ENCODE measurements at regions of chr4 and their contacts with region 1.

Region 1: GRCh38 chr4:1192091-1192492 is 19.7 kb upstream of the SPON2 start:
- DNase-seq: peak; percentile 94
- H3K4me3 Mint-ChIP-seq: no peak overlapping the region
- H3K27ac Mint-ChIP-seq: peak overlapping the region; percentile 51
- H3K4me1 Mint-ChIP-seq: peaks cover 18% of the 10 kb centered on the region
- H3K27me3 Mint-ChIP-seq: peaks cover 6% of the 10 kb centered on the region
- CTCF ChIP-seq: no peak

Region 2: DNA sequence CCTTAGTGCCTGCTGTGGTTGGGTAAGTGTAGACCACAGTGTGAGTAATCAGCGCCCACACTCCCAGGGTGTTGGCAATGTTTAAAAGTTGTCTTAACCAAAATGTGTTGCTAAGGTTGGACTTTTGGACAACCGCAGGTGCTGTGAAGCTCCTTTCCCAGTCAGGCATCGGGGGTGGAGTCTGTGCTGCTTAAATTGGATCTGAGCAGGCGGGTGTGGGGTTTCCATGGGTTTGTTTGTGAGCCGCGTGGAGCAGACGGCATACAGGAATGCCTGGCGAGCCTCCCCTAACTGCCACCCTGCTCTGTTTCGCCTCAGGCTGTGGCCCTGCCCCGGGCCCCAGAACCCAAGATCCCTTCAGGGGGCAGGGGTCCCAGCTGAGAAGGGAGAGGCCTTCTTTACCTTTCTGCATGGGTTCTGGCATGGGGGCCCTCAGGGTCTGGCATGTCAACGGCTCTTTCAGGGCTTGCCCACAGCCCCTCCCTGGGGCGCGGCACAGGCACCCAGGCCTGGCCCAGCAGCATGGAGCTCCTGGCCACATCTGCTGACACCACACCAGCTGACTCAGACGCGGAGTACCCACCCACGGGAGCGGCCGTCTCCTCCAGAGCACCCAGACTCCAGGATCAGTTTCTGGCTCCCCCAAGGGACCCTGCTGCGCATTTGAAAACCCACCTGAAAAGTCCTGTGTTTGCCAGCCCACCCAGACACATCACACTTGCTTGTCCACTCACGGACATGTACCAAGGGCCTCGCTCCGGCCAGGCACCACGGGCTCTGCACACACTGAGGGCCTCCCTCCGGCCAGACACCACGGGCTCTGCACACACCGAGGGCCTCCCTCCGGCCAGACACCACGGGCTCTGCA is 14.6 kb before region 1 on chr4:
- CTCF ChIA-PET with region 1: interaction called, 5 read pairs
- POLR2A ChIA-PET with region 1: interaction called, 34 read pairs
- intact Hi-C with region 1: no loop called
- DNase-seq: peak; percentile 62
- H3K4me3 Mint-ChIP-seq: peak overlapping the region; percentile 41
- H3K27ac Mint-ChIP-seq: peak overlapping the region; percentile 95
- H3K4me1 Mint-ChIP-seq: peaks cover 20% of the 10 kb centered on the region
- H3K27me3 Mint-ChIP-seq: no peaks in the 10 kb centered on the region
- CTCF ChIP-seq: no peak

Region 3: DNA sequence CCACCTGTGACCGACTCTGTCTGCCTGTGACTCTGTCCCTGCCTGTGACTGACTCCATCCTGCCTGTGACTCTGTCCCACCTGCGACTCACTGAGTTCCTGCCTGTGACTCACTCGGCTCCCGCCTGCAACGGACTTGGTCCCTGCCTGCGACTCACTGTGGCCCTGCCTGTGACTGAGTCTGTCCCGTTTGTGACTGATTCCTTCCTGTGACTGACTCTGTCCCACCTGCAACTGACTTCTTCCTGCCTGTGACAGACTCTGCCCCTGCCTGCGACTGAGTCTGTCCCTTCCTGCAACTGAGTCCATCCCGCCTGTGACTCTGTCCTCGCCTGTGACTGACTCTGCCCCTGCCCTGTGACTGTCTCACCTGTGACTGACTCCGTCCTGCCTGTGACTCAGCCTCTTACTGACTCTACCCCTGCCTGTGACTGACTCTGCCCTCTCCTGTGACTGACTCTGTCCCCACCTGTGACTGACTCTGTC is 145.3 kb after region 1 on chr4:
- CTCF ChIA-PET with region 1: no interaction called
- POLR2A ChIA-PET with region 1: no interaction called
- intact Hi-C with region 1: no loop called
- DNase-seq: no peak
- H3K4me3 Mint-ChIP-seq: no peak overlapping the region
- H3K27ac Mint-ChIP-seq: peak overlapping the region; percentile 82
- H3K4me1 Mint-ChIP-seq: peaks cover 5% of the 10 kb centered on the region
- H3K27me3 Mint-ChIP-seq: no peaks in the 10 kb centered on the region
- CTCF ChIP-seq: no peak

Region 4: DNA sequence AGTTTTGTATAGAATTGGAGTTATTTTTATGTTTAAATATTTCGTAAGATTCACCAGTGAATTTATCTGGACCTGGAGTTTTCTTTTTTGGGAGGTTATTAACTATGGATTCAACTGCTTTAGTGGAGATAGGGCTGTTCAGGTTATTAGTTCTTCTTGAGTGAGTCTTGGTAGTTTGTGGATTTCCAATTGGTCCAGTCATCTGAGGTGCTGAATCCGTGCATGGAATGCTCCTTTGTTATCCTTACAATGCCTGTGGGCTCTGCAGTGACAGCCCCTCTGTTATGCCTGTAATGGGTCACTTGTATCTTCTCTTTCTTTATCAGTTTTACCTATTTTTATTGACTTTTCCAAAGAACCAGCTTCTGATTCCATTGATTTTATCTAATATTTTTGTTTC is 229.6 kb after region 1 on chr4:
- CTCF ChIA-PET with region 1: no interaction called
- POLR2A ChIA-PET with region 1: no interaction called
- intact Hi-C with region 1: no loop called
- DNase-seq: no peak
- H3K4me3 Mint-ChIP-seq: no peak overlapping the region
- H3K27ac Mint-ChIP-seq: no peak overlapping the region
- H3K4me1 Mint-ChIP-seq: no peaks in the 10 kb centered on the region
- H3K27me3 Mint-ChIP-seq: peaks cover 63% of the 10 kb centered on the region
- CTCF ChIP-seq: no peak

Region 5: GRCh38 chr4:2071912-2072867 is 880.1 kb after region 1 on chr4:
- CTCF ChIA-PET with region 1: no interaction called
- POLR2A ChIA-PET with region 1: no interaction called
- intact Hi-C with region 1: no loop called
- DNase-seq: no peak
- H3K4me3 Mint-ChIP-seq: no peak overlapping the region
- H3K27ac Mint-ChIP-seq: no peak overlapping the region
- H3K4me1 Mint-ChIP-seq: no peaks in the 10 kb centered on the region
- H3K27me3 Mint-ChIP-seq: no peaks in the 10 kb centered on the region
- CTCF ChIP-seq: no peak

Measured in MCF 10A (cell line).